ENCODE measurements at regions of chr6 and their contacts with region 1.

Region 1: DNA sequence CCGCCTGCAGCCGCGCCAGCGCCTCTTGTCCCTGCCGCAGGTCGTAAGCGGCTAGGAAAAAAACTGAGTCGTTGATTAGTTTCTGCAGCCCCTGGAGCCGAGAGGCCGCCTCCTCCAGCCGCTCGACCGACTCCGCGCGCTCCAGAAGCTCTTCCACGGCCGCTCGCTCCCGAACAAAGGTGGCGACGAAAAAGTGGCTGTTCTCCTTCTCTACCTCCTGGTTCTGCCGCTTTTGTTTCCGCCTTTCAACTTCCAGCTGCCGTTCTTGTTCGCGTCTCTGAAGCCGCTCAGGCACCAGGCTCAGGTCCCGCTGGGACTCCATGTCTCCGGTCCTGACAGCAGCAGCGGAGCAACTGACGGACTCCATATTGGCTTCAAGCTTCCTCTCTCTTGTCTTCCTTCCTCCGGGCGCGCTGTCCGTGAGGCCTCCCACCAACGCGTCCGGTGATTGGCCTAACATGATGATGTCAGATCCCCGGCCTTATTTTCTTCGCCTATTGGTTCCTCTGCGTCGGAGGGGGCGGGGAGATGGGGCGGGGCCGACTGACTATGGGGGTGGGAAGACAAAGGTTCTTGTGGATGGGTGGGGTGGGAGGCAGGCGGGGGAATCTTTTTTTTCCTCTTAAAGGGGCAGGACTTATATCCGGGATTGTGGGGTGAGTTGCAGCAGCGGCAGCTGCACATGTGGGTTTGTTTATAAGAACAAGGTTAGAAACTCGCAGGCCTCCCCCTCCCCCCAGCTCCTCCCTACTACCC is at the start of gene TBCC:
- DNase-seq: peak; percentile 97
- ATAC-seq: peak; percentile 66
- H3K4me3 ChIP-seq: peak within 1 kb of the TSS; percentile 98
- H3K27ac ChIP-seq: peak within 1 kb of the TSS; percentile 80
- H3K4me1 ChIP-seq: peaks cover 21% of the 10 kb centered on the region
- H3K27me3 ChIP-seq: no peaks in the 10 kb centered on the region
- CTCF ChIP-seq: no peak
- total RNA-seq, gene TBCC: 32.3 and 36.5 TPM in 2 replicates

Region 2: GRCh38 chr6:42547407-42548329 is 198.2 kb before region 1 on chr6:
- CTCF ChIA-PET with region 1: no interaction called
- POLR2A ChIA-PET with region 1: no interaction called
- intact Hi-C with region 1: no loop called
- DNase-seq: peak; percentile 84
- ATAC-seq: peak; percentile 99
- H3K4me3 ChIP-seq: peak overlapping the region; percentile 67
- H3K27ac ChIP-seq: no peak overlapping the region
- H3K4me1 ChIP-seq: peaks cover 10% of the 10 kb centered on the region
- H3K27me3 ChIP-seq: no peaks in the 10 kb centered on the region
- CTCF ChIP-seq: peak; percentile 98

Region 3: GRCh38 chr6:42618686-42619085 is 127.2 kb before region 1 on chr6:
- CTCF ChIA-PET with region 1: no interaction called
- POLR2A ChIA-PET with region 1: no interaction called
- intact Hi-C with region 1: no loop called
- DNase-seq: peak; percentile 16
- ATAC-seq: no peak
- H3K4me3 ChIP-seq: no peak overlapping the region
- H3K27ac ChIP-seq: no peak overlapping the region
- H3K4me1 ChIP-seq: no peaks in the 10 kb centered on the region
- H3K27me3 ChIP-seq: no peaks in the 10 kb centered on the region
- CTCF ChIP-seq: no peak

Region 4: DNA sequence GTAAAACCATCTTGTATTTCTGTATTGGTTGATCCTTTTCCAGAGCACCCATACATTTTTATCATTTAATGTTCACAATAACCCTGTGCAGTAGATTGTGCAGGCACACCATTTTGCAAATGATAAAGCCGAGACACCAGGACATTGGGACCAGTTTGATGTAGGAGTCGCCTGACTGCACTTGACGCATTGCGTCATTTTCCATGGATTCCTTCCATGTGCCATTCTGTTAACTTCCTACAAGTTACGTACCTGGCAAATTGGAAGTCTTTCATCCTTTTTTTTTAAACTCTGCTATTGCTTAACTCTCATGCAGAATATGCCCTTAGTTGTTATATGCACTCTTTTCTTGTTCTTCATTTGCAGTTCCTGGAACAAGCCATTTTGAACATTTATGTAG is 66.5 kb before region 1 on chr6:
- CTCF ChIA-PET with region 1: no interaction called
- POLR2A ChIA-PET with region 1: interaction called, 21 read pairs
- intact Hi-C with region 1: no loop called
- DNase-seq: no peak
- ATAC-seq: no peak
- H3K4me3 ChIP-seq: no peak overlapping the region
- H3K27ac ChIP-seq: no peak overlapping the region
- H3K4me1 ChIP-seq: no peaks in the 10 kb centered on the region
- H3K27me3 ChIP-seq: no peaks in the 10 kb centered on the region
- CTCF ChIP-seq: no peak

Region 5: GRCh38 chr6:42692137-42692911 is 53.6 kb before region 1 on chr6:
- CTCF ChIA-PET with region 1: no interaction called
- POLR2A ChIA-PET with region 1: no interaction called
- intact Hi-C with region 1: no loop called
- DNase-seq: peak; percentile 19
- ATAC-seq: no peak; the same call in 1 of the 2 replicates
- H3K4me3 ChIP-seq: no peak overlapping the region
- H3K27ac ChIP-seq: no peak overlapping the region
- H3K4me1 ChIP-seq: no peaks in the 10 kb centered on the region
- H3K27me3 ChIP-seq: no peaks in the 10 kb centered on the region
- CTCF ChIP-seq: no peak

Region 6: GRCh38 chr6:42766141-42766670 is 20.3 kb after region 1 on chr6:
- CTCF ChIA-PET with region 1: no interaction called
- POLR2A ChIA-PET with region 1: no interaction called
- intact Hi-C with region 1: loop called (anchors 1 kb)
- DNase-seq: peak; percentile 92
- ATAC-seq: peak; percentile 96
- H3K4me3 ChIP-seq: peak overlapping the region; percentile 36; the same call in 1 of the 2 replicates
- H3K27ac ChIP-seq: peak overlapping the region; percentile 84
- H3K4me1 ChIP-seq: peaks cover 19% of the 10 kb centered on the region
- H3K27me3 ChIP-seq: no peaks in the 10 kb centered on the region
- CTCF ChIP-seq: no peak

Region 7: GRCh38 chr6:42782622-42783176 is 36.8 kb after region 1 on chr6:
- CTCF ChIA-PET with region 1: no interaction called
- POLR2A ChIA-PET with region 1: interaction called, 25 read pairs
- intact Hi-C with region 1: loop called (anchors 1 kb)
- DNase-seq: peak; percentile 84
- ATAC-seq: peak; percentile 59
- H3K4me3 ChIP-seq: peak overlapping the region; percentile 76
- H3K27ac ChIP-seq: peak overlapping the region; percentile 93
- H3K4me1 ChIP-seq: peaks cover 41% of the 10 kb centered on the region
- H3K27me3 ChIP-seq: no peaks in the 10 kb centered on the region
- CTCF ChIP-seq: no peak

Region 8: DNA sequence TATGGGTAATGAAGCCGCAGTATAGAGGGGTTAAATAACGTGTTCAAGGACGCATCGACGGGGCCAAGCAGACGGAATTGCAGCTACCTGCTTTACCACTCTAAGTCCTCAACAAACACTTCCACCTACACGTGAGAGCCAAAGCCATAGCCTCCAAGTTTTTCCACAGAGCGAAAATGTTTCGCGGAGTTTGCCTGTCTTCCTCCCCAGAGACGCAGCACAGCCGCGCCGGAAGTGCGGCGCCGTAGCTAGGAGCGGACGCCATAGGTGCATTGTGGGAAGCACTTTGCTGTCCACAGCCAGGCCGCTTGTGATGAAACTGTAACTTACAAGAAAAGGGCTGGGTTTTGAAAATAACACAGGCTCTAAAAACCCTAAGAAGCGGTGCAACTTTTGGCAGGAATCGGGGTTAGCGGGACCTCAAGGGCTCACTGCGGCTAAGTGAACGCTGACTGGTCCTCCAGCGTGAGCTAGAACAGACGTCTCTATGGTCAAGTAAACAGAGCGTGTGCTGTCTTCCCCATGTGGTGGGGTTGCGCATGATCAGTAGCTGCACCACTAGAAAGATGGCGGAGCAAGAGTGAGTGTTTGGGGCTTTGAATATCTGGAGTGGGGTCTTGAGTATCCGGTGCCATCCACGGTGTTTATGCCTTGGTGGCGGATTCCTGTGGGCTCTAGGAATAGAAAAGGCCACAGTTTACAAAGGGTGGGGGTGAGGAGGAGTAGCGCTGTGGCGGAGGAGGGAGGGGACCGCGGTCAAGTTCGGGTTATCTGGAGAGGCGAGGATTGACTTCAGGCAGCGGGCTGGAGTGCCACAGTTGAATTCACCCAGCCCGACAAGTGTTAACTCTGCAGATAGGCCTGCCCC is 133.7 kb after region 1 on chr6 and contains the start of gene RPL7L1:
- CTCF ChIA-PET with region 1: no interaction called
- POLR2A ChIA-PET with region 1: interaction called, 16 read pairs
- intact Hi-C with region 1: loop called (anchors 1 kb)
- DNase-seq: peak; percentile 85
- ATAC-seq: peak; percentile 89
- H3K4me3 ChIP-seq: peak within 1 kb of the TSS; percentile 85
- H3K27ac ChIP-seq: peak within 1 kb of the TSS; percentile 76
- H3K4me1 ChIP-seq: peaks cover 4% of the 10 kb centered on the region; the same call in 1 of the 2 replicates
- H3K27me3 ChIP-seq: no peaks in the 10 kb centered on the region
- CTCF ChIP-seq: no peak
- total RNA-seq, gene RPL7L1: 87.6 and 99.5 TPM in 2 replicates

Region 9: GRCh38 chr6:42984001-42984923 is 238.4 kb after region 1 on chr6 and contains the start of gene PPP2R5D:
- CTCF ChIA-PET with region 1: interaction called, 16 read pairs
- POLR2A ChIA-PET with region 1: no interaction called
- intact Hi-C with region 1: no loop called
- DNase-seq: peak; percentile 99
- ATAC-seq: peak; percentile 91
- H3K4me3 ChIP-seq: peak within 1 kb of the TSS; percentile 82
- H3K27ac ChIP-seq: peak within 1 kb of the TSS; percentile 12; the same call in 1 of the 2 replicates
- H3K4me1 ChIP-seq: peaks cover 32% of the 10 kb centered on the region
- H3K27me3 ChIP-seq: no peaks in the 10 kb centered on the region
- CTCF ChIP-seq: no peak
- total RNA-seq, gene PPP2R5D: 54.1 and 55.6 TPM in 2 replicates

Region 10: GRCh38 chr6:44116641-44117382 is 1370.9 kb after region 1 on chr6:
- CTCF ChIA-PET with region 1: no interaction called
- POLR2A ChIA-PET with region 1: interaction called, 13 read pairs
- intact Hi-C with region 1: no loop called
- DNase-seq: peak; percentile 86
- ATAC-seq: peak; percentile 62
- H3K4me3 ChIP-seq: peak overlapping the region; percentile 49
- H3K27ac ChIP-seq: peak overlapping the region; percentile 93
- H3K4me1 ChIP-seq: peaks cover 68% of the 10 kb centered on the region
- H3K27me3 ChIP-seq: no peaks in the 10 kb centered on the region
- CTCF ChIP-seq: no peak